ENCODE measurements at regions of chr16 and their contacts with region 1.

Region 1: GRCh38 chr16:28823872-28824716 is 1.3 kb downstream of the ATXN2L start:
- DNase-seq: peak; percentile 96
- H3K4me3 ChIP-seq: peak overlapping the region; percentile 78 to 91 (median 91)
- H3K27ac ChIP-seq: peak overlapping the region; percentile 94
- H3K4me1 ChIP-seq: peaks cover 37% of the 10 kb centered on the region
- H3K27me3 ChIP-seq: no peaks in the 10 kb centered on the region
- CTCF ChIP-seq: peak in 1 of 2 donors; percentile 25

Region 2: GRCh38 chr16:28839899-28840298 is 15.8 kb after region 1 on chr16:
- CTCF ChIA-PET with region 1: no interaction called
- dilution Hi-C with region 1: no loop called
- in situ Hi-C with region 1: no loop called
- intact Hi-C with region 1: loop called (anchors 2 kb)
- DNase-seq: no peak
- H3K4me3 ChIP-seq: no peak overlapping the region
- H3K27ac ChIP-seq: no peak overlapping the region
- H3K4me1 ChIP-seq: peaks cover 5% of the 10 kb centered on the region
- H3K27me3 ChIP-seq: no peaks in the 10 kb centered on the region
- CTCF ChIP-seq: no peak

Region 3: GRCh38 chr16:28846080-28846932 is 22.2 kb after region 1 on chr16 and contains the start of gene TUFM:
- CTCF ChIA-PET with region 1: no interaction called
- dilution Hi-C with region 1: no loop called
- in situ Hi-C with region 1: no loop called
- intact Hi-C with region 1: loop called (anchors 1 kb)
- DNase-seq: peak; percentile 98
- H3K4me3 ChIP-seq: peak within 1 kb of the TSS; percentile 69 to 92 (median 89)
- H3K27ac ChIP-seq: peak within 1 kb of the TSS; percentile 59
- H3K4me1 ChIP-seq: peaks cover 9% of the 10 kb centered on the region
- H3K27me3 ChIP-seq: no peaks in the 10 kb centered on the region
- CTCF ChIP-seq: peak; percentile 50 to 59
- total RNA-seq, gene TUFM: 94.9 to 142 TPM

Region 4: GRCh38 chr16:28902909-28903308 is 78.8 kb after region 1 on chr16:
- CTCF ChIA-PET with region 1: no interaction called
- dilution Hi-C with region 1: no loop called
- in situ Hi-C with region 1: no loop called
- intact Hi-C with region 1: no loop called
- DNase-seq: no peak
- H3K4me3 ChIP-seq: no peak overlapping the region
- H3K27ac ChIP-seq: no peak overlapping the region
- H3K4me1 ChIP-seq: no peaks in the 10 kb centered on the region
- H3K27me3 ChIP-seq: no peaks in the 10 kb centered on the region
- CTCF ChIP-seq: no peak

Measured in mammary epithelial cell (primary cell).